BJ (cell line): ENCODE measurements at regions of chr13 and their contacts with region 1.

Region 1: DNA sequence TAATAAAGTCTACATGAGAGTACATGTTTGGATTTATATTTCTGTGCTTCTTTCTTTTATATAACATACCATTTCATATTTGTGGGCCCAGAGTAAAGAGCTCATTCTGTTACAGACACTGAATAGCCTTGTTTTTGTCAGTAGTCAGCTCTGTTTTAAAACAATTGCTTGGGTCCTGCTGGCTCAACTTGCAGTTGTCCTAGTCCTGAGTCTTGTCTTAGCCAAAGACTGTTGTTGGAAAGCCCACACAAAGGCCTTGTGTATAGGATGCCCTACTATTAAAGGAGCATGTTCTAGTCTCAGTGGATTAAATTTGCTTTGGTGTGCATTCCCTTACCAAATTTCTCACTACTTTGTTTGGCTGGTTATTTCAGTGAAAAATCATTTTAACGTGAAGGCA is 3.8 kb upstream of the KCNRG start:
- DNase-seq: no peak
- H3K4me3 ChIP-seq: no peak overlapping the region
- H3K27me3 ChIP-seq: no peaks in the 10 kb centered on the region
- CTCF ChIP-seq: no peak

Region 2: DNA sequence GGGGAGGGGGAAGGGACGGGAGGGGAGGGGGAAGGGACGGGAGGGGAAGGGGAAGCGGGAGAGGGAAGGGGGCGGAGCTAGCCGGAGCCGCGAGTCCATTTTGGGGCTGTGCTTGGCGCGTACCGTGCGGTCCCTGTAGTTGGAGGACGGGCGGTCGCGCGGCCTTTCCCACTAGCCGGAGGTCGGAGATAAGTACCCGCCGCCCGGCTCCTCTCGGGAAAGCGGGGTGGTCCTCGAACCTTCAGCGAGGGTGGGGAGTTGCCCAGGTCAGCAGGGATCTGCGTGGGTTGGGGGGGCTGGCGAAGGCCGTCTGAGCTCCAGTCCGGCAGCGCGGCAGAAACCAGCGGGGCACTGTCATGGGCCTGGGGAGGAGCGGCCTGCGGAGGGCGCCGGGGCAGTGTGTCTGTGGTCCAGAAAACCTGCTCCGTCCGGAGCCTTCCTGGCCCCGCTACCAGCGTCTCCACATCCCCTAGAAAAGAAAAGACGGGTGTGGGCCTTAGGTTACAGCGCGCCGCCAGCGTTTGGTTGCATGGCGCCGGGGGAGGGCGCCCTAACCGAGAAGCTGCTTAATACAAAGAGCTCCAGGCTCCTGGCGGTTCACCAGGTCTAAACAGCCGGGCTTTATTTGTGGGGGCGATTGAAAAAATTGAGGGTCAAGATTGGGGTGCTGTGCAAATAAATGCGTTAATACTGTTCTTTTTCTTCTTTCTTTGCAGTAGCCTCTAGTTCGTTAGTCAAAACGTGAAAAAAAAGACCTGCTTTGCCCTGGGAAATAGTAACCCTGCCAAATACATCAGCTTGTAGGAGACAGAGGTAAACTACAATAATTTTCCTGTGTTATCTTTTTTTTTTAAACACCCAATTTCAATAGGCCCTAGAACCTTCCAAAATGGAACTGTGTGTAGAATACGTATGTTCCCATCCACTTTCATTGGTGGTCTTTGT is 14.2 kb before region 1 on chr13 and contains the start of gene TRIM13:
- CTCF ChIA-PET with region 1: interaction called, 16 read pairs
- POLR2A ChIA-PET with region 1: interaction called, 3 read pairs
- DNase-seq: no peak
- H3K4me3 ChIP-seq: peak within 1 kb of the TSS; percentile 84
- H3K27me3 ChIP-seq: no peaks in the 10 kb centered on the region
- CTCF ChIP-seq: peak; percentile 89
- polyA plus RNA-seq, gene TRIM13: 11.7 and 22.9 TPM in 2 replicates

Region 3: GRCh38 chr13:50244713-50245574 is 233.5 kb after region 1 on chr13:
- CTCF ChIA-PET with region 1: no interaction called
- POLR2A ChIA-PET with region 1: no interaction called
- DNase-seq: peak; percentile 59
- H3K4me3 ChIP-seq: no peak overlapping the region
- H3K27me3 ChIP-seq: no peaks in the 10 kb centered on the region; the same call in 1 of the 2 replicates
- CTCF ChIP-seq: no peak